Posterior cingulate gyrus (tissue), 11 donors: ENCODE measurements at regions of chr4 and their contacts with region 1.

Region 1: DNA sequence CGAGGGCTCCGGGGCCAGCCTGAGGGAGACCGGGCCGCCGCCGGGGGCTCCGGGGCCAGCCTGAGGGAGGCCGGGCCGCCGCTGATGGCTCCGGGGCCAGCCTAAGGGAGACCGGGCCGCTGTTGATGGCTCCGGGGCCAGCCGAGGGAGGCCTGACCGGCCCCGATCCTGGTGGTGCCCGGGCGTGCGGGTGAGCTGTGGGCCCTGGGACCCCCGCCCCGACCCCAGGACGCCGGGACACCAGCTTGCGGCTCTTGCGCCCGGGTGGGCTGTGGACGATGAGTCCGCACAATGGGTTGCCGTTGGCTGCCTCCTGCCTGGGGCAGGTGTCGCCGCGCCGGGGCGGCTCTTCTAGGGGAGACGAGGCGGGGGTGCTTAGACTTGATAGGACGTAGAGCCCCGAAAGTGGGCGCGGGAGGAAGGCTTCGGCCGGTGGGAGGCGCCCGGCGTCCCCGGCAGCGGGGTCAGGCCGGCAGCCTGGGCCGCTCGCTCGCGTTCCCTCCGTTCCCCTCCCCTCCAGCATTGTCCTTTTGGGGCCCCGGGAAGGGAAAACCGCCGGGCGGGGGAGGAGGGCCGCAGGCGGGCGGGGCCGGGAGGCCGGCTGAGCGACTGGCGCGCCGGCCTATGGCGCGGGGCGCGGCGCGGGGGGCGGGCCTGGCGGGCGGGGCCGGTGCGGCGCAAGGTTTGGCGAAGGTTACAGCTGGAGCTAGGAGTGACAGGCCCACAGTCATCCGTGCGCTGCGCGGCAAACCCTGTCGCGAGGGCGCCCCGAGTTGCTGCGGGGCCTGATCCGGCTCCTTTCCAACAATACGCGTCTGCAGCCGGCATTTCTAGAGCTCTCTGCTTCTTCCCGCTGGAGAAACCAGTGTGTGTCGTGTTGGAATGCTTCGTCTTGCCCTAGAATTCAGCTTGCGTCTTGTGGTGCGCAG is 790 bp downstream of the KIAA0232 start:
- DNase-seq: peak; percentile 85 to 99 (median 93)

Region 2: DNA sequence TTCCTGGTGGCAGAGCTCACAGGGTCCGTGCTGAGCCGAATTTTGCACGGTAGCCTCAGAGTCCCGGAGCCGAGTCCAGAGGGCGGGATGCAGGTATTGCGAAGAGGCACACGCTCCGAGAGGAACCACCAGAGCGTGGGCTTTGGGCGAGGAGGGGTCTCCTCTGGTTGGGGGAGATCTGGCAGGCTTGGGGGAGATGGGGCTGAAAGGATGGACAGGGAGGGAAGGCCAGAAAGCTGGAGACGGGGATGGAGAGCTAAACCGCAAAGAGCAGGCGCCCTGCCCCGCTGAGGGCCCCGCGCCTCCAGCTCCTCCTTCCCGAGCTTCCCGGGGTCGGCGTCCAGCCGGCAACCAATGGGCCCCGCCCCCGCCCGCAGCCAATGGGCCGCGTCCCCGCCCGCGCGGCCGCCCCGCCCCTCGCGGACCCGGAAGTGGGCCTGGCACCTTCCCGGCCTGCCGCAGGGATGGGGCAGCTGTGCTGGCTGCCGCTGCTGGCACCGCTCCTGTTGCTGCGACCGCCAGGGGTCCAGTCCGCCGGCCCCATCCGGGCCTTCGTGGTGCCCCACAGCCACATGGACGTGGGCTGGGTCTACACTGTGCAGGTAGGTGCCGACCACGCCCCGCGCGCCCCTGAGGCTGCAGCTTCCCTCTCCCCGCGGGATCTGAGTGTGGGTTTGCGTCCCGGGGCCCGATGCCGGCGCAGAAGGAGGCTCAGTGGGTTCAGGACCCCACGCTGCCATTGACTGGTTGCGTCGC is 208.4 kb before region 1 on chr4 and contains the start of gene MAN2B2:
- intact Hi-C with region 1: no loop called
- DNase-seq: peak; percentile 80 to 99 (median 89)

Region 3: GRCh38 chr4:6873792-6874461 is 90.6 kb after region 1 on chr4:
- intact Hi-C with region 1: loop called (anchors 5 kb)
- DNase-seq: peak in 9 of 10 donors; percentile 63 to 96 (median 79)

Region 4: DNA sequence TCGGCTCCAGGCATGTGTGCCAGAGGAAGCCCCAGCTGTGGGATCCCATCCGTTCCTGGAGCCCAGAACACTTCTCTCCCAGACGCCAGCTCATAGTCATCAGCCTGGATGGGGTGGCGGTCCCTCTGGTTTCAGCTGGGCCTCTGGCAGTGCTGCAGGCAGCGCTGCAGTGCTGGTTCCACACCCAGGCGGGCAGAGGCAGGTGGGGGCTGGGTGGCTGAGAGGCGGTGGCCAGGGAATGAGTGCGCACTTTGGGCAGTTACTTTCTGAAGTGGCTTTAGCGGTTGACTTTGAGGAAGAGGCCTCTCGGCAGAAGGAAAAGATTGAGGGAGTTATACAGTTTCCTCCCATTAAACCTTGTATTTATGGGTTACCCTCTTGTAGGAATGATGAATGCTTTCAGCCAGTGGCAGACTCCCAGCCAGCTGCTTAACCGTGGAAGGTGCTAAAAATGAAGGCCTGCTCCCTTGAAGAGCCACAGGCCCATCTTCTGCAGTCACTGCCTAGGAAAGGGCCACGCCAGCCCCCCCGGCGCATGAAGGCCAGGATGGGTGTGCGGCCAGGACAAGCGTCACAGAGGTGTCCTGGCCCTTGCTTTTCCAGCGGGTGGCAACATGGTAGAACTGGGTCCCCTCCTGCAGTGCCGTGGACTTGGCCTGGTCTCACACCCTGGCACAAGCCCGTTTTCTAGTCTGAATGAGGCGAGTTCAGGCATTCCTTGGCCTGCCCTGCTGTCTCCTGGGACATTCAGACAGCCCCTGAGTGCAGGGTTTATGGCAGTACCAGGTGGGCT is 269.8 kb after region 1 on chr4:
- intact Hi-C with region 1: no loop called
- DNase-seq: peak in 3 of 10 donors; percentile 27 to 84 (median 81)

Region 5: GRCh38 chr4:7067452-7068278 is 284.3 kb after region 1 on chr4 and contains the start of gene GRPEL1:
- intact Hi-C with region 1: loop called (anchors 10 kb)
- DNase-seq: peak; percentile 98 to 100 (median 99)